K562 (cell line): ENCODE measurements at regions of chr1 and their contacts with region 1.

Region 1: DNA sequence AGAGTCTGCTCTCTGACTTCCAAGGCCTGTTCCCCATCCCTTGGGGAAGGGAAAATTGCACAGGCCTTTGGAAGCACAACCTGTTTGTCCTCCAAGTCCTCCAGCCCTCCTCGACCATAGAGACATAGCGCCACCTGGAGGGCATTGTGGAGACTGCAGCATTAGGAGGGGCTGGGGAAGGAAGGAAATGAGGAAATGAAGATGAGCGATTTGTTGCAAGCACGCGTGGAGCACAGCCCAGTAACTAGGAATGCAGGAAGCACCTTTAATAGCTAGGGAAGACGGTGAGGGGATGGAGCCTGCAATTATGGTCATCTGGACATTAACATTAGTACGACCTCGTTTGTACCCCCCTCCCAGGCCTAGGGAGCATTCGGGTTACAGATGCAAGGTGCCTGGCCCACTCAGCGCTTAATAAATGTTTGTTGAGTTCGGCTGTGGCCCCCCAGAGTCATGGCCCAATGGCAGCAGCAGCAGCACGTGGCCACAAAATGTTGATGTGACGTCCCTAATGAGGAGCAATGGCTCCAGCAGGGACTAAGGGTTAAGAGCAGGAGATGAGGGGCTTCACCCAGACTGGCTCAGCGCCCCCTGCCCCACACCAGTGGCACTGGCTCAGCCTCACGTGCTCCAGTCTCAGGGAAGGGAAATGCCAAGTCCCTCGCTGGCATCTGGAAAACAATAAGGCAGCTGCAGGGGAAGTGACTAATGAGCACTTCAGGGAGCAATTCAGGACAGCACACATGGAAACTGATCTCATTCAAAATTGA is 8.0 kb upstream of the CAMK2N1 start:
- DNase-seq: peak; percentile 88 to 90 (median 90)
- ATAC-seq: peak; percentile 90
- H3K4me3 ChIP-seq: no peak overlapping the region
- H3K27ac ChIP-seq: no peak overlapping the region
- H3K4me1 ChIP-seq: peaks cover 0 to 3% of the 10 kb centered on the region in 2 experiments; a peak in 2 of 5 replicates
- H3K27me3 ChIP-seq: peaks cover 10 to 30% of the 10 kb centered on the region in 2 experiments; a peak in 4 of 5 replicates
- CTCF ChIP-seq: peak; percentile 96 to 99 (median 99)
- EP300 ChIP-seq: no peak
- POLR2A ChIP-seq: no peak
- RAD21 ChIP-seq: peak; percentile 99

Region 2: GRCh38 chr1:19926296-19927129 is 567.5 kb before region 1 on chr1:
- CTCF ChIA-PET with region 1: no interaction called
- POLR2A ChIA-PET with region 1: no interaction called
- in situ Hi-C with region 1: loop called (anchors 5 kb)
- intact Hi-C with region 1: no loop called
- DNase-seq: no peak
- ATAC-seq: no peak
- H3K4me3 ChIP-seq: no peak overlapping the region
- H3K27ac ChIP-seq: no peak overlapping the region
- H3K4me1 ChIP-seq: peaks cover 0 to 8% of the 10 kb centered on the region in 2 experiments; a peak in 2 of 5 replicates
- H3K27me3 ChIP-seq: peaks cover 36 to 51% of the 10 kb centered on the region in 2 experiments
- CTCF ChIP-seq: no peak
- EP300 ChIP-seq: no peak
- POLR2A ChIP-seq: no peak
- RAD21 ChIP-seq: no peak

Region 3: DNA sequence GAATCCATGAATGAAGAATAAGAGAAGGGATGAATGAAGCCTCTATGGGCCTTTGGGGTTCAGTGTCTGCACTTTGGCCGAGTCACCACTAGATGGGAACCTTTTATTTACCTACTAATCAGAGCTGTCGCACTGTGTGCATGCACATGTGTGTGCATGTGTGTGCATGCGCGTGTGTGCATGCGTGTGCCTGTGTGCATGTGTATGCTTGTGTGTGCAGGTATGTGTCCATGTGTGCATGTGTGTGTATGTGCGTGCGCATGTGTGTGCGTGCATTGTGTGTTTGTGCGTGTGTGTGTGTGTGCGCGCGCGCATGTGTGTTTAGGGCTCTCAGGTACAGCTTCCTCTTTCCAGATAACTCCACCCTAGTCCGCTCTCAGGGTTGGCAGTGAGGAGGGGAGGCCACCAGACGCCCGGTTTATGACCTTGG is 328.5 kb before region 1 on chr1:
- CTCF ChIA-PET with region 1: no interaction called
- POLR2A ChIA-PET with region 1: interaction called, 3 read pairs
- in situ Hi-C with region 1: no loop called
- intact Hi-C with region 1: loop called (anchors 5 kb)
- DNase-seq: peak; percentile 46 to 66 (median 56)
- ATAC-seq: peak; percentile 86
- H3K4me3 ChIP-seq: no peak overlapping the region
- H3K27ac ChIP-seq: no peak overlapping the region
- H3K4me1 ChIP-seq: peaks cover 0 to 6% of the 10 kb centered on the region in 2 experiments; a peak in 2 of 5 replicates
- H3K27me3 ChIP-seq: peaks cover 0 to 19% of the 10 kb centered on the region in 2 experiments; a peak in 3 of 5 replicates
- CTCF ChIP-seq: peak; percentile 67 to 75 (median 70)
- EP300 ChIP-seq: no peak
- POLR2A ChIP-seq: no peak
- RAD21 ChIP-seq: peak in 1 of 2 experiments; percentile 87; a peak in 3 of 4 replicates

Region 4: GRCh38 chr1:20361806-20362640 is 132.0 kb before region 1 on chr1:
- CTCF ChIA-PET with region 1: interaction called, 7 read pairs
- POLR2A ChIA-PET with region 1: no interaction called
- in situ Hi-C with region 1: no loop called
- intact Hi-C with region 1: loop called (anchors 5 kb)
- DNase-seq: peak; percentile 62 to 82 (median 77)
- ATAC-seq: peak; percentile 83
- H3K4me3 ChIP-seq: no peak overlapping the region
- H3K27ac ChIP-seq: no peak overlapping the region
- H3K4me1 ChIP-seq: peaks cover 0 to 10% of the 10 kb centered on the region in 2 experiments; a peak in 1 of 5 replicates
- H3K27me3 ChIP-seq: peaks cover 35 to 83% of the 10 kb centered on the region in 2 experiments
- CTCF ChIP-seq: peak; percentile 81 to 96 (median 87)
- EP300 ChIP-seq: no peak
- POLR2A ChIP-seq: no peak
- RAD21 ChIP-seq: peak; percentile 39 to 79; a peak in 3 of 4 replicates

Region 5: GRCh38 chr1:20376880-20377494 is 117.0 kb before region 1 on chr1:
- CTCF ChIA-PET with region 1: interaction called, 23 read pairs
- POLR2A ChIA-PET with region 1: no interaction called
- in situ Hi-C with region 1: loop called (anchors 5 kb)
- intact Hi-C with region 1: loop called (anchors 2 kb)
- DNase-seq: peak; percentile 57 to 89 (median 81)
- ATAC-seq: peak; percentile 97
- H3K4me3 ChIP-seq: no peak overlapping the region
- H3K27ac ChIP-seq: no peak overlapping the region
- H3K4me1 ChIP-seq: no peaks in the 10 kb centered on the region
- H3K27me3 ChIP-seq: peaks cover 0 to 27% of the 10 kb centered on the region in 2 experiments; a peak in 2 of 5 replicates
- CTCF ChIP-seq: peak; percentile 77 to 90 (median 85)
- EP300 ChIP-seq: no peak
- POLR2A ChIP-seq: no peak
- RAD21 ChIP-seq: peak; percentile 33 to 63; a peak in 3 of 4 replicates

Region 6: DNA sequence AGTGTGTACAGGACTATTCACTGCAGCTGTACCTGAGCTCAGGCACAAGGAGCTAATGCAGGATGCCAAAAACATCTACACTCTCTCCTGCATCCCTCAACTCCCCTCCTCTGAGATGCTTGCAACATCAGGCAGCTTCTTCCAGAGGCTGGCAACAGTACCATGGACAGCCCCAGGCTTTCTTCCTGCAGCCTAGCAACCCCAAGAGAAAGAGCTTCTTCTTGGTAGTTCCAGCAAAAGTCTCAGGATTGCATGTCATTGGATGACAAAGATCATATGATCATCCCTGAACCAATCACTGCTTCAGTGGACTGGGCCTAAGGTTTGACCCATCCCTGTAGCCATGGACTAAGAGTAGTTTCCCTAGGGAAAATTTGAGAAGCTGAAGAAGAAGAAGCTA is 54.7 kb before region 1 on chr1:
- CTCF ChIA-PET with region 1: interaction called, 23 read pairs
- POLR2A ChIA-PET with region 1: no interaction called
- in situ Hi-C with region 1: no loop called
- intact Hi-C with region 1: loop called (anchors 2 kb)
- DNase-seq: peak in 3 of 4 experiments; percentile 6 to 29 (median 26)
- ATAC-seq: no peak; the same call in 2 of the 3 replicates
- H3K4me3 ChIP-seq: no peak overlapping the region
- H3K27ac ChIP-seq: no peak overlapping the region
- H3K4me1 ChIP-seq: no peaks in the 10 kb centered on the region
- H3K27me3 ChIP-seq: peaks cover 8 to 23% of the 10 kb centered on the region in 2 experiments; a peak in 2 of 5 replicates
- CTCF ChIP-seq: no peak
- EP300 ChIP-seq: no peak
- POLR2A ChIP-seq: no peak
- RAD21 ChIP-seq: no peak

Region 7: DNA sequence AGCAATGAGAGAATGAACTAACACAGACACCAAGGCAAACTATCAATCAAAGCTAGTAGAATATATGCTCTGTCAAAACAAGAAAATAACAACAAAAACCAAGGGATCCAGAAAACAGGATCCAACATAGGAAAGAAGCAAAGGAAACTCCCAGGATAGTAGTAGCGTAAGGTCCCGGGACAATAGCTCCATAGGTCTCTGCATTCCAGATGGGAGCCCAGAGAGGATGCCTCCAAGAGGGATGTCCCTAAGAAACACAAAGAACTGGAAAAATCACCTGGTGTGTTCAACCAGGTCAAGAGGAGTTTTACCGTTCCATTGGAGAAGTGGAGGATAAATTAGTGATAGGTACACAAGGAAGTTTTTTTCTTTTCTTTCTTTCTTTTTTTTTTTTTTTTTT is 52.6 kb after region 1 on chr1:
- CTCF ChIA-PET with region 1: no interaction called
- POLR2A ChIA-PET with region 1: no interaction called
- in situ Hi-C with region 1: no loop called
- intact Hi-C with region 1: no loop called
- DNase-seq: no peak
- ATAC-seq: no peak
- H3K4me3 ChIP-seq: no peak overlapping the region
- H3K27ac ChIP-seq: no peak overlapping the region
- H3K4me1 ChIP-seq: peaks cover 0 to 6% of the 10 kb centered on the region in 2 experiments; a peak in 1 of 5 replicates
- H3K27me3 ChIP-seq: peaks cover 41 to 45% of the 10 kb centered on the region in 2 experiments
- CTCF ChIP-seq: no peak
- EP300 ChIP-seq: no peak
- POLR2A ChIP-seq: no peak
- RAD21 ChIP-seq: no peak